ENCODE measurements at regions of chr3 and their contacts with region 1.

Region 1: DNA sequence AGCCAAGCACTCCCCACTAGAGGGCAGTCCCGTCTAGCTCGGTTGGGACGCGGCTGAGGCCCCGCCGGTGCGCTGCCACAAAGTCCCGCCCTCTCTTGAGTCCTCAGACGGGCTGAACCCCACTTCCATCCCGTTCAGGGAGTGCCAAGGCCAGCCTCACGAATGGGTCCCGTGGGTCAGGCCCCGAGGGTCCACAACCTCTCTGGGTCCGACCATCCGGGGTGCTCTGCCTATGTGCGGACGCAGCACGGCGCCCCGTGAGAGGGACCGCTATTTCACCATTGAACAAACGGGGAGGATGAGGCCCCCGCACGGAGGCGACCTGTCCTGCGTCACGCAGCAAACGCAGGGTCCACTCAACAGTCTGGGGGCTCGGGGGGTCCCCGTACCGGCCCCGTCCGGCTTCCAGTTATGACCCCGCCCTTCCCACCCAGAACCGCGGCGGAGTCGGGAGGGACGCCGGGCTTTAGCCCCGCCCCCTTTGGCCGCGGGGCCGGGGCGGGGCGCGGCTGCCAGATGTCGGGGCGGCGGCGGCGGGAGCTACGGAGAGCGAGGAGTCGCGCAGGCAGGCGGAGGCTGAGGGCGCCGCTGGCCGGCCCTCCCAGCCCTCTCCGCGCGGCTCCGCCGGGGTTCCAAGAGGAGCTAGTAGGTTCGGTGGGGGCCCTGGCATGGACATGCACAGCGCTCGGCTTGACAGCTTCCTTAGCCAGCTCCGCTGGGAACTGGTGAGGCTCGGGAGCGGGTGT is at the start of gene INKA1:
- DNase-seq: peak; percentile 64
- ATAC-seq: peak; percentile 90
- H3K4me3 ChIP-seq: peak within 1 kb of the TSS; percentile 80
- H3K27ac ChIP-seq: peak within 1 kb of the TSS; percentile 61
- H3K4me1 ChIP-seq: no peaks in the 10 kb centered on the region
- H3K27me3 ChIP-seq: no peaks in the 10 kb centered on the region
- CTCF ChIP-seq: peak; percentile 87
- total RNA-seq, gene INKA1: 2.2 TPM

Region 2: GRCh38 chr3:49689046-49689907 is 113.6 kb before region 1 on chr3 and contains the starts of genes MST1 and RNF123:
- CTCF ChIA-PET with region 1: interaction called, 10 read pairs
- POLR2A ChIA-PET with region 1: no interaction called
- in situ Hi-C with region 1: no loop called
- intact Hi-C with region 1: no loop called
- DNase-seq: no peak
- ATAC-seq: peak; percentile 60
- H3K4me3 ChIP-seq: peak within 1 kb of the TSS; percentile 82 to 84
- H3K27ac ChIP-seq: peak within 1 kb of the TSS; percentile 94
- H3K4me1 ChIP-seq: no peaks in the 10 kb centered on the region
- H3K27me3 ChIP-seq: no peaks in the 10 kb centered on the region
- CTCF ChIP-seq: no peak; the same call in 1 of the 2 replicates
- total RNA-seq, gene MST1: 14.0 TPM
- total RNA-seq, gene RNF123: 23.1 TPM

Region 3: DNA sequence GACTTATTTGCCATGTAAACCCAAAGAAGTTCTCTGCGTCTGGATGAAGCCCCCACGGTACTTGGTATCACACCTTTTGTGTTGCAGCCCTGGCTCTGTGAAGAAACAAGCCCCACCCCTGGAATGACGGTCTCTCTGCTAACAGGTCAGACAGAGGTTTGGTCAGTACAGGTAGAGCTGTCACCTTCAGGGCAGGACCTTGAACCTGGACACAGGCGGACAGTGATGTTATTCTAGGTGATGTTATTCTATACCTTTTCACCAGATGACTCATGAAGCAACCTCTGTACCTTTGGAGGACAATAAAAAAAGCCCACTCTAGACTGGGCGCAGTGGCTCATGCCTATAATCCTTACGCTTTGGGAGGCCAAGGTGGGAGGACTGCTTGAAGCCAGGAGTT is 68.1 kb before region 1 on chr3:
- CTCF ChIA-PET with region 1: no interaction called
- POLR2A ChIA-PET with region 1: interaction called, 12 read pairs
- in situ Hi-C with region 1: no loop called
- intact Hi-C with region 1: no loop called
- DNase-seq: no peak
- ATAC-seq: no peak
- H3K4me3 ChIP-seq: no peak overlapping the region
- H3K27ac ChIP-seq: no peak overlapping the region
- H3K4me1 ChIP-seq: no peaks in the 10 kb centered on the region
- H3K27me3 ChIP-seq: no peaks in the 10 kb centered on the region
- CTCF ChIP-seq: no peak

Region 4: DNA sequence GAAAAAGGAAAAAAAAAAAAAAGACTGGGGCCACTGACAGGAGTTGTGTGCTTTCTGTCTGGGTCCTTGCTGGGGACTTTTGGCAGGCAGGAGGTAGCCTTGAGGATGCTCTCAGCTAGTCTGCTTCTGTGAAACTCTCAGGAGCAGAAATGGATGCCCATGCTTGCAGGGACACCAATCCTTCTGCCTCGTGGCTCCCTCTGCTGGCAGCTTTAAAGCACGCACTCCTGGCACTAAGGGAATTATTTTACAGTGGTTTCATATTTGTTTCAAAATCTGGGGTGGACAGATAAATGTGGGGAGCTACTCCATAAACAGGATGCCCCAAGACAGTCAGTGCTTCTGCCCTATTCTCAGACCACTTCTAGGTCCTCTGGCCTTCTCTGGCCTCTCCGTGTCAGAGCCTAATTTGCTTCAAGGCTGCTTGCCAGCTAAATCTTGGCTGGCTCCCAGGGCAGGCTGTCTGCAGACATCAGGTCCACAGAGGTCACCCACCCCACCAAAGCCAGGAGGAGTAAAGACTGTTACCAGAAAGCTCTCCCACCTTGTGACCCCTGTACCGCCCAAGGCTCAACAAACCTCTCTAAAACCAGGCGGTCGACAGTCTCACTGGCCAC is 36.4 kb after region 1 on chr3:
- CTCF ChIA-PET with region 1: interaction called, 19 read pairs
- POLR2A ChIA-PET with region 1: no interaction called
- in situ Hi-C with region 1: no loop called
- intact Hi-C with region 1: loop called (anchors 1 kb)
- DNase-seq: peak; percentile 47
- ATAC-seq: peak; percentile 86
- H3K4me3 ChIP-seq: no peak overlapping the region
- H3K27ac ChIP-seq: no peak overlapping the region
- H3K4me1 ChIP-seq: no peaks in the 10 kb centered on the region
- H3K27me3 ChIP-seq: no peaks in the 10 kb centered on the region
- CTCF ChIP-seq: peak; percentile 88

Region 5: DNA sequence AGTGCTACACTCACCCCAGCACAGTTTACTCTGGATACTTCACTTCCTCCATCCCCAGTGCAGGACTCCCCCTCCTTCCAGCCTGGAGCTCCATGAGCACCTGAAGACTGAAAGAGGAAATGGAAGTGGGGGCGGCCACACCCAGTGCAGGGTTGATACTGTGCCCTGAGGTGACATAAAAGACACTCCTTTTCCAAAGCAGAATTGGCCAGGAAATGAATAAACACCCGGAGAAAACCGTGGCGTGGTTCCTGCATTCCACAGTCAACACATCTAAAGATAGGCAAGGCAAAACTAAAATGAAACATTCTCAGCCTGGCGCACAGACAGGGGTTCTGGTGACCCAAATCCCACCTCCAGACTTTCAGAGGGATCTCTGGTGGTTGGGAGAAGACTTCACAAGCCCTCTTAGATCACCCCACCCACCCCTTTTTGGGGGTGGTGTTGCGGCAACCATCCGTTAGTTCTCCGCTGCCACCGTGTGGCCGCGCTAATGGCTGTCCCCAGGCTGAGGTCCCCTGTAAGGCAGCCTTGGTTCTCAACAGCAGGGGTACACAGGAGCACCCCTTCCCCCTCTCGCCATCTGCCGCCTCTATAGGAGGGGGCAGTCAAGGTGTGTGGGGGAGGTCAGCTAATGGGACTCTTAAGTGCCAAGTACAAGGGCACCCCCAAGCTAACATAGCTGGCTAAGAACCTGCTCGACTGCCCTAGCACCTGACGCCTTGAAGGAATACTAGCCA is 103.3 kb after region 1 on chr3:
- CTCF ChIA-PET with region 1: interaction called, 3 read pairs
- POLR2A ChIA-PET with region 1: no interaction called
- in situ Hi-C with region 1: no loop called
- intact Hi-C with region 1: loop called (anchors 5 kb)
- DNase-seq: no peak
- ATAC-seq: peak; percentile 65
- H3K4me3 ChIP-seq: peak overlapping the region in 1 of 2 experiments; percentile 49; a peak in 2 of 4 replicates
- H3K27ac ChIP-seq: peak overlapping the region; percentile 72
- H3K4me1 ChIP-seq: peaks cover 22% of the 10 kb centered on the region
- H3K27me3 ChIP-seq: no peaks in the 10 kb centered on the region
- CTCF ChIP-seq: peak; percentile 86

Region 6: DNA sequence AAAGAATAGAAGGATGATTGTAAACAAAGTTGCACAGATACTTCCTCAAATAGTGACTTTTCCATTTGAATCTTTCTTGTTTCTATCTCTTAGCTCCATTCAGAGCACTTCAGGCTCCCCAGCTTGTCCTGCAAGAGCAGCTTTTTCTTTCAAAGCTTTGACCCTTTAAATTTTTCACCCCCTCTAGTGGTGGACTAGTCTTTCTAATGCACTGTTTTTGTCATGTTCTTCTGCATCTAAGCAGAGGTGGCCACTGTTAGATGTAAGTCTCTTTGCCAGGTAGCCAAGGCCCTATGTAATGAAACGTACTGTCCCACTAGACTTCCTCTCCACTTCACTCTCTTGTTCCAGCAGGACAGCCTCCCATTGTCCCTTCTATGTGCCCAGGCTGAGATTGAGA is 1508.2 kb after region 1 on chr3:
- CTCF ChIA-PET with region 1: no interaction called
- POLR2A ChIA-PET with region 1: no interaction called
- in situ Hi-C with region 1: no loop called
- intact Hi-C with region 1: no loop called
- DNase-seq: peak; percentile 5
- ATAC-seq: no peak
- H3K4me3 ChIP-seq: no peak overlapping the region
- H3K27ac ChIP-seq: no peak overlapping the region
- H3K4me1 ChIP-seq: no peaks in the 10 kb centered on the region
- H3K27me3 ChIP-seq: no peaks in the 10 kb centered on the region
- CTCF ChIP-seq: peak; percentile 50

Measured in Panc1 (cell line).